ENCODE measurements at regions of chr2 and their contacts with region 1.

Region 1: DNA sequence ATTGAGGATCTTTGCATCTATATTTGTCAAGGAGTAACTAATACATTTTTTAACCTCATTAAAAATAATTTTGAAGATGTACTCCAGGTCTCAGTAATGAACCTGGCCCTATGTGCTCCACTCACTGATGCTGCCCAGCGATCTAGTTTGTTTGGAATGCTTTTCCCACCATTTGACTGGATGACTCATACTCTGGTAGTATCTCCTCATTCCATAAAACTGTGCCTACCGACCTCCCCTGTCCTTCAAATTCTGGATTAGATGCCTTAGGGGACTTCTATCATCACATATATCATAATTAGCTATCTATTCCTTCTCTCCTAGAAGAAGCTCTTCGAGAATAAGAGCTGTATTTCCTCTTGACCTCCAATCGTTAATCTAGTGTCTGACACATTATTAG is 83.8 kb downstream of the FAM117B start:
- DNase-seq: no peak
- ATAC-seq: no peak
- H3K4me3 Mint-ChIP-seq: no peak overlapping the region
- H3K27ac Mint-ChIP-seq: peak overlapping the region; percentile 61
- H3K4me1 Mint-ChIP-seq: peaks cover 38% of the 10 kb centered on the region
- H3K27me3 Mint-ChIP-seq: no peaks in the 10 kb centered on the region
- CTCF ChIP-seq: no peak

Region 2: DNA sequence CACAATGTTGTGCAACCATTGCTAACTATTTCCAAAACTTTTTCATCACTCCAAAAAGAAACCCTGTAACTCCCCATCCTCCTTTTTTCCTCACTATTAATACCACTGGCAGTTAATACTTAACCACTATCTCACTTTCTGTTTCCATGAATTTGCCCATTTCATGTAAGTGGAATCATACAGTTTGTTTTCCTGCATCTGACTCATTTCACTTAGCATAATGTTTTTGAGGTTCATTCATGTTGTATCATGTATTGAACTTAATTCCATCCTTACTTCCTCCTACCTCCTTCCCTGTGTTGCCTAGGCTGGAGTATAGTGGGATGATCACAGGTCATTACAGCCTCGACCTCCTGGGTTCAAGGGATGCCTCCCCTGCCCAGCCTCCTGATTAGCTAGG is 15.5 kb before region 1 on chr2:
- CTCF ChIA-PET with region 1: interaction called, 7 read pairs
- POLR2A ChIA-PET with region 1: interaction called, 3 read pairs
- intact Hi-C with region 1: loop called (anchors 2 kb)
- DNase-seq: no peak
- ATAC-seq: no peak
- H3K4me3 Mint-ChIP-seq: no peak overlapping the region
- H3K27ac Mint-ChIP-seq: peak overlapping the region; percentile 60
- H3K4me1 Mint-ChIP-seq: peaks cover 58% of the 10 kb centered on the region
- H3K27me3 Mint-ChIP-seq: no peaks in the 10 kb centered on the region
- CTCF ChIP-seq: no peak

Region 3: DNA sequence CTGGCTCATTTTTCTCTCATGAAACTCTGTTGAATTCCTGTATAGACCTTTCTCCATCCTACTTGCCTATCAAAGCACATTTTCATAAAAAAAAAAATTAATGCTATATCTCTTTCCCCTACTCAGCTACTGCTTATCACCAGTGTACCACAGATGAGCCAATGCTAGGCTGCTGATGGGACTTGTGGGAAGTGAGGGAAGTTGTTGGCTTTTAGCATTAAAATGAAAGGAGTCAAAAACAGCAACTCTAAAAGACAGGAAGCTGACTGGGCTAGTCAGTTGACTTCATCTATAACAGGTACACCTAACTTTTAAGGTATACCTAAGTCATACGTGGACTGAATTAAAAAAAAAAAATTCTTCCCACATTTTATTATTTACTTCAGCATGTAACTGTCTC is 18.2 kb after region 1 on chr2:
- CTCF ChIA-PET with region 1: no interaction called
- POLR2A ChIA-PET with region 1: interaction called, 4 read pairs
- intact Hi-C with region 1: loop called (anchors 2 kb)
- DNase-seq: no peak
- ATAC-seq: no peak
- H3K4me3 Mint-ChIP-seq: no peak overlapping the region
- H3K27ac Mint-ChIP-seq: no peak overlapping the region
- H3K4me1 Mint-ChIP-seq: peaks cover 1% of the 10 kb centered on the region
- H3K27me3 Mint-ChIP-seq: no peaks in the 10 kb centered on the region
- CTCF ChIP-seq: no peak

Region 4: GRCh38 chr2:204611017-204611631 is 1892.5 kb after region 1 on chr2:
- CTCF ChIA-PET with region 1: no interaction called
- POLR2A ChIA-PET with region 1: no interaction called
- intact Hi-C with region 1: no loop called
- DNase-seq: no peak
- ATAC-seq: no peak
- H3K4me3 Mint-ChIP-seq: no peak overlapping the region
- H3K27ac Mint-ChIP-seq: no peak overlapping the region
- H3K4me1 Mint-ChIP-seq: no peaks in the 10 kb centered on the region
- H3K27me3 Mint-ChIP-seq: no peaks in the 10 kb centered on the region
- CTCF ChIP-seq: no peak

Measured in activated B cell treated with CpG ODN at 0.5 μM for 24 hours (primary cell).